ENCODE measurements at regions of chr18 and their contacts with region 1.

Region 1: DNA sequence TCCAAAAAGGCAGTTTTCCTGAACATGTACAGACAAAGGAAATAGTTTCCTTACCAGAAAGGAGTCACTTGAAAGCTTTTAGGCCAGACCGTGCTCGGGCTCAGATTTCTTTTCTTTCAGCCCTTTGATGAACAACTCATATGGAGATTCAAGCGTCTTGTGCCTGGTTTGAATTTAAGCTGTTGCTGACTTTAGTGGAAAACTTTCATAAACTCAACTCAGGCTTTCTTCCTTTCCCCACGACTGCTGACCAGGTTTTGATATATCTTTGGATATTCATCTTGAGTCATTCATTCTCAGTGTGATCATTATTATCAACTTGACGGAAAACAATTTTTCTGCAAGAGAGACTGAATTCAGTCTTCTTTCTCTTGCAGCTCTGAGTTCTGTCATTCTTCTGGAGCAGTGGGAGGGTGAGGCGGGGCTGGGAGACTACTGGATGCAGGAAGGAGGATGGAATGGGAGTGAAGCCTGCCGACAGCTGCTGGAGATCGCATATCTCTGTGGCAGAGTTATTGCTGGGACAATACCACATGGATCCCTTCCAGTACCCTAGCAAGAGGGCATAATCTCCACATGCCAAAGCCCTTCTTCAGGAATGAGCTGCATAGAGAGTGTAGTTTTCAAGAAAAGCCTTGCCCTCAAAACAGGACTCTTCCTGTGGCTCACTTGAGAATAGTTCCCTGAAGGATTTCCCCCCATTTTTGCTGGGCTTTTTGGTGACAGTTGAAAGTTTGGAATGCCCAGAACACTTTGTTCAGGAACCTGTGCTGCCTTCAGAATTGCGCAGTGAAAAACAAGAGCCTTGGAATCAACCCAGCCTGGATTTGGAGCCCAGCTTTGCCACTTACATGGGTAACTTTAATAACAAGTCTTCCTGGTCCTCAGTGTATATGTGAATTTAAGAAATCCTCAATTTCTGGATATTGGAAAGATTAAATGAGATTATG is 364.4 kb downstream of the ZNF521 start:
- DNase-seq: peak; percentile 82 to 91
- ATAC-seq: peak; percentile 81 to 84
- H3K4me3 ChIP-seq: peak overlapping the region; percentile 45 to 59 (median 48)
- H3K27ac ChIP-seq: peak overlapping the region; percentile 82 to 88 (median 86)
- H3K4me1 ChIP-seq: peaks cover 61 to 62% of the 10 kb centered on the region in 2 donors
- H3K27me3 ChIP-seq: no peaks in the 10 kb centered on the region
- CTCF ChIP-seq: no peak
- POLR2A ChIP-seq: peak; percentile 25 to 47

Region 2: DNA sequence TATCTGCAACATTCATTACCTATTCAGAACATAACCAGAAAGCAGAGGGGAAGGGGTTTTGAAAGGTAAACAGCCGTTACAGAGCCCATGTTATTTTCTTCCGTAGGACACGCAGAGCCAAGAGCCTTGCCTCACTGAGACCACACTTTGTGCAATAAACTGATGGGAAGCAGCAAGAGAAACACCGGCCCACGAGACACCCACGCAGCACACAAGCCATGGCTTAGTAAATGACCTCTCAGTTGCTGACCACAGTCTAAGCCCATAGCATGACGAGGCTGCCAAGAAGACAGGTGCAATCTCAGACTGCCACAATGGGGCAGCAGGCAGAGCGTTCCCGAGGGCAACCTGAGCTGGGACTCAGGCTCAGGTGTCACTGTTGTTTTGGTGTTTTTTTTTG is 789.1 kb before region 1 on chr18:
- in situ Hi-C with region 1: no loop called
- intact Hi-C with region 1: loop called (anchors 5 kb)
- DNase-seq: peak; percentile 95 to 96
- ATAC-seq: peak; percentile 84 to 88
- H3K4me3 ChIP-seq: peak overlapping the region in 1 of 4 donors; percentile 7
- H3K27ac ChIP-seq: peak overlapping the region; percentile 80 to 97 (median 92)
- H3K4me1 ChIP-seq: peaks cover 73 to 83% of the 10 kb centered on the region in 2 donors
- H3K27me3 ChIP-seq: no peaks in the 10 kb centered on the region
- CTCF ChIP-seq: no peak
- POLR2A ChIP-seq: peak in 1 of 2 donors; percentile 20

Region 3: DNA sequence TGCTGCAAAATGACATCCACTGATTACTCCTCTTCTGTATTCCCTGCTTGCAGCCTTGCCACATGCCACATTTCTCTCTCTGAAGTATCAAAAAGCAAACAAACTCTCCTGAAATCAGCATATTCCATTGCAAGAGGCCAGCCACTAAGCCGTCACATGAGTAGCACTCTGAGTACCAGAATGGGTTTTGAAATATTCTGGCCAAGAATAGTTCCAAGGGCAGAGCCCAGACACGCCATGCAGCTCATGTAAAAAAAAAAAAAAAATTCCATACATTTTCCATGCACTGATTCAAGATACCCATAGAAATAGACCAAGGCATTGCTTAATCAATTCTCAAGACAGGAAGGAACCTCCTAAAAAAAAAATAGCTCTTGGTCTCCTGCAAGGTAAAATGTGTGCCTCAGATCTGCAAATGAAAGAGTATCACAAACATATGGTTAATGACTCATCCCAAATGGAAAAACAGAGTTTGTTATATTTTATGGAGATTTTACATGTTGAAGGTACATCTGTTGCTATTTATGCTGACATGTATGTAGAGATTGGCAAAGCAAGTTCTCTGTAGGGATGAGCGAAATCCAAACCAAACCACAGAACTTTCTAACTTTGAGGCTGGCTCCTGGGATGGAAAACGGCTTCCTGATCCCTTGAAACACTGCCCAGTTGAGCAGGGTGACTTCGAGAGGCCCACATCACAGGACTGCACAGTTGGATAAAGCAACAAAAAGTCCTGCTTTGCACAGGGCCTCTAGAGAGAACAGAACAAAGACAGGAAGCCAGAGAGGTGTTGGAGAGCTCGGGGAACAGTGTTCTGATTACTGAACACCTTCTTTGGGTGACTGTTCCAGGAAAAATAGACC is 18.2 kb after region 1 on chr18:
- in situ Hi-C with region 1: no loop called
- intact Hi-C with region 1: loop called (anchors 2 kb)
- DNase-seq: no peak
- ATAC-seq: peak; percentile 79 to 84
- H3K4me3 ChIP-seq: no peak overlapping the region
- H3K27ac ChIP-seq: peak overlapping the region; percentile 45 to 68 (median 61)
- H3K4me1 ChIP-seq: peaks cover 12 to 14% of the 10 kb centered on the region in 2 donors
- H3K27me3 ChIP-seq: no peaks in the 10 kb centered on the region
- CTCF ChIP-seq: no peak
- POLR2A ChIP-seq: no peak

Region 4: DNA sequence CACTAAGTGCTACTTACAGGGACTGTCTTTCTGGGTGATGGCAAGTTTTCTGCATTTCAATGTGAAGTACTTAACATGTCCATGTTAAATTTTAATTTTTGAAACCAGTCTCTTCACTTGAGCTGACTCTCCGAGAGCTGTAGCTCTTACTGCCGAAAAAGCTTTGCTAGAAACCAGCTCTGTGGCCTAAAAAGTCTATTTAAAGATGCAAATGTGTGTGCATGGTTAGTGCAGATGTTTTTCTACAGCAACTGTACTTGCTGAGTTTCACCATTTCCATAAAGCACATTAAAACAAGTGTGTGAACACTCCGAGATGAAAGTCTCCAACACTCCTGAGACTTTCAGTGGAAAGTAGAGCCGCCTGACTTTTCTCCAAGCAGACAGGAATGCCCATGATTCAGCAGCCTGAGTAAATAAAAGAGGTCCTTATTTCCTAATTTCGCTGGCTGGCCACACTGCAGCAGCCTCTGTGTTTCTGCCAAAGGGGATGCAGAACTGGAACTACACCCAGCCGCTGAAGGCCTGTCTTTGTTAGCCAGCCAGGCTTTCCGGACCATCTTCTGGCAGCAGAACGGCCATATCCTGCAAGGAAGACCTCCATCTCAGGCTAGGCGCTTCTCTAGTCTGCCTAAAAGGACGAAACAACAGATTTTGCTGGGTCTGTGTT is 243.2 kb after region 1 on chr18:
- in situ Hi-C with region 1: no loop called
- intact Hi-C with region 1: loop called (anchors 5 kb)
- DNase-seq: peak; percentile 68 to 78
- ATAC-seq: peak; percentile 94 to 95
- H3K4me3 ChIP-seq: peak overlapping the region in 2 of 4 donors; percentile 20 to 21
- H3K27ac ChIP-seq: peak overlapping the region; percentile 57 to 72 (median 68)
- H3K4me1 ChIP-seq: peaks cover 33% of the 10 kb centered on the region in 2 donors
- H3K27me3 ChIP-seq: no peaks in the 10 kb centered on the region
- CTCF ChIP-seq: no peak
- POLR2A ChIP-seq: no peak

Region 5: GRCh38 chr18:25467226-25467987 is 479.8 kb after region 1 on chr18:
- in situ Hi-C with region 1: no loop called
- intact Hi-C with region 1: loop called (anchors 5 kb)
- DNase-seq: peak; percentile 88 to 95
- ATAC-seq: peak; percentile 98 to 99
- H3K4me3 ChIP-seq: peak overlapping the region in 3 of 4 donors; percentile 3 to 25 (median 5)
- H3K27ac ChIP-seq: peak overlapping the region; percentile 73 to 84 (median 82)
- H3K4me1 ChIP-seq: peaks cover 31 to 36% of the 10 kb centered on the region in 2 donors
- H3K27me3 ChIP-seq: no peaks in the 10 kb centered on the region
- CTCF ChIP-seq: no peak
- POLR2A ChIP-seq: no peak